Heart left ventricle (tissue), 16 donors: ENCODE measurements at regions of chr2 and their contacts with region 1.

Region 1: GRCh38 chr2:47386551-47386950 is 16.4 kb upstream of the MSH2 start:
- DNase-seq: no peak
- ATAC-seq: no peak
- H3K4me3 ChIP-seq: no peak overlapping the region
- H3K27ac ChIP-seq: no peak overlapping the region
- H3K4me1 ChIP-seq: no peaks in the 10 kb centered on the region
- H3K27me3 ChIP-seq: no peaks in the 10 kb centered on the region
- CTCF ChIP-seq: no peak
- POLR2A ChIP-seq: no peak

Region 2: GRCh38 chr2:47334356-47335136 is 52.0 kb before region 1 on chr2:
- intact Hi-C with region 1: loop called (anchors 1 to 2 kb)
- DNase-seq: peak in 3 of 5 donors; percentile 28 to 51 (median 29)
- ATAC-seq: peak in 3 of 4 donors; percentile 5 to 34 (median 32)
- H3K4me3 ChIP-seq: no peak overlapping the region
- H3K27ac ChIP-seq: peak overlapping the region in 8 of 12 donors; percentile 15 to 77 (median 53)
- H3K4me1 ChIP-seq: peaks cover 0 to 22% (median 11%) of the 10 kb centered on the region in 12 donors
- H3K27me3 ChIP-seq: no peaks in the 10 kb centered on the region
- CTCF ChIP-seq: no peak
- POLR2A ChIP-seq: no peak

Region 3: GRCh38 chr2:47339745-47340541 is 46.6 kb before region 1 on chr2:
- intact Hi-C with region 1: loop called (anchors 1 to 2 kb)
- DNase-seq: no peak
- ATAC-seq: no peak
- H3K4me3 ChIP-seq: no peak overlapping the region
- H3K27ac ChIP-seq: no peak overlapping the region
- H3K4me1 ChIP-seq: peaks cover 0 to 26% (median 12%) of the 10 kb centered on the region in 12 donors
- H3K27me3 ChIP-seq: no peaks in the 10 kb centered on the region
- CTCF ChIP-seq: no peak
- POLR2A ChIP-seq: no peak

Region 4: DNA sequence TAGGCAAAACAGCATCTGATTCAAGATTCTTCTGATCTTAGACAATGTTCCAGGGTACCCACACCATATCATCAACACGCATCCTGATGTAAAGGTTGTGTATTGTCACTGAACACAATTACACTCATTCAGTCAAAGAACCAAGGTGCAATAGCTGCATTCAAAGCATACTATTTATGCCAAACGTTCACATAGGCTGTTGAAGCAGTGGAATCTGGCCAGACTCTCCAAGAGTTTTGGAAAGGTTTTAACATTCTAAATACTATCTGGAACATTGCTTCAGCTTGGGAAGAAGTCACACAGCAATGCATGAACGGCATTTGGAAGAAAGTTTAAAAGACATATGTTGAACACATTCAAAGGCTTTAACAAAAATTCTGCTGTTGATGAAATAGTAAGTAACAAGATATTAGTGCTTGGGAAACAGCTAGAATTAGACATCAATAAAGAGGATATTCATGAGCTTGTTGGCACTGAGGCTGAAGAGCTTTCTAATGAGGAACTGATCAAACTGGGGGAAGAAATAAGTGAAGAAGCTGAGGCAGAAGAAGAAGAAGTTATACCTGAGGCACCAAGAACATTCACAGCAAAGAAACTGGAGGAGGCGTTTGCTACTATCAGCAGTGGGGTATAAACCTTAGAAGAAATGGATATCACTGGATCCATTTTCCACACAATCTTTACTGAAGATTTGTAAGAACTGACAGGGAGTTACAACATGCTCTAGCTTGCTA is 348.8 kb after region 1 on chr2:
- intact Hi-C with region 1: no loop called
- DNase-seq: no peak
- ATAC-seq: no peak
- H3K4me3 ChIP-seq: no peak overlapping the region
- H3K27ac ChIP-seq: no peak overlapping the region
- H3K4me1 ChIP-seq: no peaks in the 10 kb centered on the region
- H3K27me3 ChIP-seq: peaks cover 0 to 5% (median 0%) of the 10 kb centered on the region in 9 donors
- CTCF ChIP-seq: no peak
- POLR2A ChIP-seq: no peak